PC-9 (cell line): ENCODE measurements at regions of chr11 and their contacts with region 1.

Region 1: DNA sequence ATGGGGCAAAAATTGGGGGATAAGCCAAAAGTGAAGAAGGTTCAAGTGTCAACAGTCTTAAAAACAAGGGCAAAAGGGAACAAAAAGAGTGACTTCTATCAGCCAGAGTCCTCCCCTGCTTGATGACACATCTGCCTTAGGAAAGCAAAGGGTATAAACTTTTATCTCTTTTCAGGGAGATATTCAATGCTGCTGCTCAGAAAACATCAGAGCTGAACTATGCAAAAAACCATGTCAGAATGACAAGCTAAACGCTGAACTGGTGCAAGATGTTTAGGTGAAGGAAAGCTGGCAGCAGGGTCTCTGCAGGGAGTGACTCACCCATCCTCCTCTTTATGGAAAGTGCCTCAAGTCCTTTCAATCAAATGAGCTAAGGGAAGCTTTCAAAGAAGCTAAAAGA is 24.7 kb downstream of the ALG9 start:
- DNase-seq: peak; percentile 27 to 88
- H3K4me3 ChIP-seq: peak overlapping the region; percentile 27
- H3K27ac ChIP-seq: peak overlapping the region; percentile 98
- H3K4me1 ChIP-seq: peaks cover 90% of the 10 kb centered on the region
- H3K27me3 ChIP-seq: no peaks in the 10 kb centered on the region
- CTCF ChIP-seq: 0 out of 2 replicates have a peak, but pooled peaks have one; percentile 1

Region 2: GRCh38 chr11:111601979-111602864 is 244.4 kb before region 1 on chr11 and contains the start of gene SIK2:
- CTCF ChIA-PET with region 1: interaction called, 8 read pairs
- POLR2A ChIA-PET with region 1: no interaction called
- intact Hi-C with region 1: loop called (anchors 1 kb)
- DNase-seq: peak; percentile 90 to 95
- H3K4me3 ChIP-seq: peak within 1 kb of the TSS; percentile 89
- H3K27ac ChIP-seq: peak within 1 kb of the TSS; percentile 60
- H3K4me1 ChIP-seq: peaks cover 43% of the 10 kb centered on the region
- H3K27me3 ChIP-seq: no peaks in the 10 kb centered on the region
- CTCF ChIP-seq: peak; percentile 78
- total RNA-seq, gene SIK2: 16.2 and 16.6 TPM in 2 replicates

Region 3: GRCh38 chr11:111870886-111871692 is 24.5 kb after region 1 on chr11 and contains the start of gene ALG9:
- CTCF ChIA-PET with region 1: interaction called, 6 read pairs
- POLR2A ChIA-PET with region 1: interaction called, 10 read pairs
- intact Hi-C with region 1: no loop called
- DNase-seq: peak; percentile 56 to 80
- H3K4me3 ChIP-seq: peak within 1 kb of the TSS; percentile 99
- H3K27ac ChIP-seq: peak within 1 kb of the TSS; percentile 17; the same call in 1 of the 2 replicates
- H3K4me1 ChIP-seq: peaks cover 13% of the 10 kb centered on the region
- H3K27me3 ChIP-seq: no peaks in the 10 kb centered on the region
- CTCF ChIP-seq: peak; percentile 68
- total RNA-seq, gene ALG9: 19.1 and 27.8 TPM in 2 replicates

Region 4: DNA sequence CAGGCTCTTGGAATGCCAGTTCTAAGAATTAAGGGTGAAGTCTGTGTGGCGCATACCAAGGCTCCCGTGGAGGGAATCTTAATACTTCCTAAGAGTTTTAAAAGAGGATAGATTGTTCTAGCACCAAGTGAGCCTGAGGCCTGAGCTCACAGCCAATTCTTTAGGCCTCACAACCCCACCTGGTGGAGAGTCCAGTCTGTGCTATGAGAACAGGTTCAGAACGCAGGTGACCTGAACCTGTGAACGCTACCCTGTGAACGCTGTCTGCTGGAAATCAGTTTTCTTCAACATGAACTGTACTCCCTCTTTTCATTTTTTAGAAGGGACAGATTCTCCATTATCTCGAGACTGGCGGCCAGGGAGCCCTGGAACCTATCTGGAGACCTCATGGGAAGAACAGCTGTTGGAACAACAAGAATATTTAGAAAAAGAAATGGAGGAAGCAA is 135.4 kb after region 1 on chr11:
- CTCF ChIA-PET with region 1: interaction called, 4 read pairs
- POLR2A ChIA-PET with region 1: interaction called, 14 read pairs
- intact Hi-C with region 1: no loop called
- DNase-seq: peak; percentile 53 to 58
- H3K4me3 ChIP-seq: no peak overlapping the region
- H3K27ac ChIP-seq: no peak overlapping the region
- H3K4me1 ChIP-seq: 0 out of 2 replicates have a peak, but pooled peaks cover 4% of the 10 kb centered on the region
- H3K27me3 ChIP-seq: 0 out of 2 replicates have a peak, but pooled peaks cover 12% of the 10 kb centered on the region
- CTCF ChIP-seq: peak; percentile 86

Region 5: DNA sequence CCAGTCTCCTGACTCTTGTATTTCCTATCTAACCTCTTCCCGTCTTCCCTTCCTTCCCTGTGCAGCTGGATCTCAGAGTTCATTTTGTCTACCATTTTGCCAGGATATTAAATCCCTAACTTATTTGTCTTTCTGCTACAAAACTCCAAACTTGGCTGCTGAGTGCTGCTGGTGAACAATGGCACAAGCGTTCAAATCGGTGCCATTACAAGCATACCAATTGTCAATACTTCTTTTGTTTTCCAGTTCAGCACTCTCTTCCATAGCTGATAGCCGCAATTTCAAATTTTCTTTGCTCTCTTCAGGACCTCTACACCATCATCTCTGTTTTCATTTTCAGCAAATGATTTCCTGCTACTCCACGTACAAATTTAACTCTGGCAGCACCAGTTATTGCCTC is 303.9 kb after region 1 on chr11:
- CTCF ChIA-PET with region 1: no interaction called
- POLR2A ChIA-PET with region 1: interaction called, 22 read pairs
- intact Hi-C with region 1: no loop called
- DNase-seq: no peak
- H3K4me3 ChIP-seq: no peak overlapping the region
- H3K27ac ChIP-seq: no peak overlapping the region
- H3K4me1 ChIP-seq: peaks cover 2% of the 10 kb centered on the region
- H3K27me3 ChIP-seq: no peaks in the 10 kb centered on the region
- CTCF ChIP-seq: no peak

Region 6: DNA sequence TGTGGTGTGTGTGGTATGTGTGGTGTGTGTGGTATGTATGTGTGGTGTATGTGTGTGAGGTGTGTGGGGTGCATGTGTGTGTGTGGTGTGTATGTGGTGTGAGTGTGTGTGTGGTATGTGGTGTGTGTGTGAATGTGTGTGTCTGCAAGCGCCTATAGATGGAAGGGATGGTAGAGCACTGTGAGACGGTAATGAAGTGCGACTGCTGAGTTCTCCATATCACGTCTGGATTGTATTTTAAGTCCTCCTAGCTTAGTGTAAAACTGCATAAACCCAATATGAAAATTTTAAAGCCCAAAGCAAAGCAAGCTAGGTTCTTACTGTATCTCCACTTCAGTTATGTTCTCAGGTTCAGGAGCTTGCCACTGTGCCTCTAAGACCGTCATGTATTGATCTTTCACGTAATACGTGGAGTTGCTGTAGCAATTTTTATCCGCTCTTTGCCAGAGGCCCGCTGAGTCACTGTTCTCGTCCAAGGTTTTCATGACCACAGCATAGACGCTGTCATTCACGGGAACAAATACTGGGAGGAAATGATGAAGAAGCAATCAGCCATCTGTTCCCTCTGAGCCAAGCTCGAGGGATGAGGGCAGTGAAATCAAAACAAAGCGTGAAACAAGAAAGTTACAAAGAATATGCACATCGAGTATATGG is 408.6 kb after region 1 on chr11:
- CTCF ChIA-PET with region 1: no interaction called
- POLR2A ChIA-PET with region 1: no interaction called
- intact Hi-C with region 1: no loop called
- DNase-seq: no peak
- H3K4me3 ChIP-seq: no peak overlapping the region
- H3K27ac ChIP-seq: no peak overlapping the region
- H3K4me1 ChIP-seq: no peaks in the 10 kb centered on the region
- H3K27me3 ChIP-seq: no peaks in the 10 kb centered on the region
- CTCF ChIP-seq: no peak